Breast epithelium (tissue), 4 donors: ENCODE measurements at regions of chr5 and their contacts with region 1.

Region 1: GRCh38 chr5:179858586-179859427 is at the start of gene MRNIP:
- DNase-seq: peak; percentile 93 to 95
- H3K4me3 ChIP-seq: peak within 1 kb of the TSS; percentile 82 to 95 (median 89)
- H3K27ac ChIP-seq: peak within 1 kb of the TSS; percentile 84 to 92
- H3K4me1 ChIP-seq: no peaks in the 10 kb centered on the region
- H3K27me3 ChIP-seq: no peaks in the 10 kb centered on the region
- CTCF ChIP-seq: no peak
- POLR2A ChIP-seq: no peak
- total RNA-seq, gene MRNIP: 32.3 to 67.2 (median 48.8) TPM

Region 2: GRCh38 chr5:179258922-179259730 is 599.7 kb before region 1 on chr5:
- intact Hi-C with region 1: loop called (anchors 5 kb)
- DNase-seq: peak in 1 of 2 donors; percentile 43
- H3K4me3 ChIP-seq: no peak overlapping the region
- H3K27ac ChIP-seq: peak overlapping the region in 1 of 2 donors; percentile 48
- H3K4me1 ChIP-seq: no peaks in the 10 kb centered on the region
- H3K27me3 ChIP-seq: no peaks in the 10 kb centered on the region
- CTCF ChIP-seq: no peak
- POLR2A ChIP-seq: no peak